B cell (primary cell): ENCODE measurements at regions of chr4 and their contacts with region 1.

Region 1: GRCh38 chr4:38319456-38320342 is 344.3 kb upstream of the KLF3 start:
- DNase-seq: peak; percentile 85
- ATAC-seq: peak; percentile 81
- H3K4me3 ChIP-seq: peak overlapping the region; percentile 43 to 74 (median 54)
- H3K4me3 Mint-ChIP-seq: peak overlapping the region; percentile 83
- H3K27ac ChIP-seq: peak overlapping the region; percentile 82 to 87
- H3K27ac Mint-ChIP-seq: peak overlapping the region; percentile 86
- H3K4me1 ChIP-seq: peaks cover 16 to 21% of the 10 kb centered on the region in 2 donors
- H3K4me1 Mint-ChIP-seq: peaks cover 29% of the 10 kb centered on the region
- H3K27me3 ChIP-seq: no peaks in the 10 kb centered on the region
- H3K27me3 Mint-ChIP-seq: no peaks in the 10 kb centered on the region
- CTCF ChIP-seq: peak; percentile 93

Region 2: DNA sequence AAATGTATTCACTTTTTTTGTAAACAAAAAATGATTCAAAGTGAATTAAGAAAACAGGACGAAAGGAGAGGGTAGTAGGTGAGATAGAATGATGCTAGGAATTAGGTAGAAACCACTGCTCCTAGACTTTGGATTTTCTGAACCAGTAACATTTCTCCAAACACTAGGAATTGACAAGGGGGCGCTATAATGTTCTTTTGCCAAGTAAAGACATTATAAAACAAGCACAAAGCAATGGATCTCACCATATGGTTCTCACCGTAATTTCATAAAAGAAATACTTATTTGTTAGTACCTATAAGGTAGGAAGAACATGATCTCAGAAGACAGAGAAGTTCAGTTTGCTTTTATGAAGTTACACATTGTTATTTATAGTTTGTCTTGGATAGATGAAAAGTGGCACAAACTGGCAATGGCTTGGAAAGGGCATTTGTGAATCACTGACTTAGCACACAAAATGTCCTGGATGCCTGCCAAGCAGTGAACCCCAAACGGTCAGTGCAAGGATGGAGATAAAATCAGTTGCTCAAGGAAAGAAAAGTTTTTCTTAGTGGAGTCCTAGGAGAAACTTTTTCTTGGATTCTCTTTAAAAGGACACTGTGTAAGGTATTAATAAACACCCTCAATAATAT is 436.9 kb before region 1 on chr4:
- CTCF ChIA-PET with region 1: no interaction called
- POLR2A ChIA-PET with region 1: no interaction called
- intact Hi-C with region 1: no loop called
- DNase-seq: no peak
- ATAC-seq: no peak
- H3K4me3 ChIP-seq: no peak overlapping the region
- H3K4me3 Mint-ChIP-seq: no peak overlapping the region
- H3K27ac ChIP-seq: no peak overlapping the region
- H3K27ac Mint-ChIP-seq: no peak overlapping the region
- H3K4me1 ChIP-seq: peaks cover 11 to 14% of the 10 kb centered on the region in 2 donors
- H3K4me1 Mint-ChIP-seq: peaks cover 12% of the 10 kb centered on the region
- H3K27me3 ChIP-seq: no peaks in the 10 kb centered on the region
- H3K27me3 Mint-ChIP-seq: no peaks in the 10 kb centered on the region
- CTCF ChIP-seq: no peak

Region 3: GRCh38 chr4:38675146-38676121 is 355.7 kb after region 1 on chr4:
- CTCF ChIA-PET with region 1: interaction called, 109 read pairs
- POLR2A ChIA-PET with region 1: no interaction called
- intact Hi-C with region 1: loop called (anchors 1 kb)
- DNase-seq: peak; percentile 87
- ATAC-seq: peak; percentile 73
- H3K4me3 ChIP-seq: no peak overlapping the region
- H3K4me3 Mint-ChIP-seq: peak overlapping the region; percentile 33
- H3K27ac ChIP-seq: peak overlapping the region in 1 of 2 donors; percentile 73
- H3K27ac Mint-ChIP-seq: peak overlapping the region; percentile 59
- H3K4me1 ChIP-seq: peaks cover 55 to 59% of the 10 kb centered on the region in 2 donors
- H3K4me1 Mint-ChIP-seq: peaks cover 78% of the 10 kb centered on the region
- H3K27me3 ChIP-seq: no peaks in the 10 kb centered on the region
- H3K27me3 Mint-ChIP-seq: no peaks in the 10 kb centered on the region
- CTCF ChIP-seq: peak; percentile 93

Region 4: DNA sequence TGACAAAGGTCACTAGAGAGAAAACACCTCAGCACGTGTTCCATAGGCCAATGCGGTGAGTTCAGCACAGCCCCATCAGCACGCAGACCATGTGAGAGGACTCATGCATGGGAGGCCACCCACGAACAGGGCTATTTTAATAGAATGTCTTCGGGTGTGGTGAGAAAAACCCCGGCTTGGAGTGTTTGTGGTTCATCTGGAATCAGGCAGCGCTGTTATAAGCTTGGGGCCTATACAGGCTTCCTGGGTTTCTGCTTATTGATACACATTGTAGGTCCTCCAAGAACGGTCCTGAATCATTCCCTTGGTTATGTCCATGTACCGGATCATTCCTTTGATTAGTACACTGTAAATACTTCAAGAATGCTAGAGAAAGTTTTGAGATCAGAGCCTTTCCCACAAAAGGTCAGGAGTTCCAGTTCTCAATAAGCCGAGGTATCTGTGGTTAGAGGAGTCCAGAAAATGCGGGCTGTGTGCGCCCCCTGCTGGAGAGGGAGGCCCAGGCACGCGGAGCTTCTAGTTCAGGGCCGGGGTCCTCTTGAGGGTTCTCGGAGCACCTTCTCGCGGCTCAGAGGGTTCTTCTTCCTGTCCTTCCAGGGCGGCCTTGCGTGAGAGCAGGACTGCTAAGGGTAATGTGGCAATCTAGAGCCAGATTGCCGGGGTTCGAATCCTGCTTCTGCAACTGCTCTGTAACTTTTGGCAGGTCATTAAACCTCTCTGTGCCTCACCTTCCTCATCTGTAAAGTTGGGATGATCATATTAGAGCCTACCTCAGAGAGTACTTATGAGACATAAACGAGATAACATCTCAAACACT is 411.3 kb after region 1 on chr4:
- CTCF ChIA-PET with region 1: interaction called, 3 read pairs
- POLR2A ChIA-PET with region 1: no interaction called
- intact Hi-C with region 1: loop called (anchors 1 kb)
- DNase-seq: peak; percentile 88
- ATAC-seq: peak; percentile 83
- H3K4me3 ChIP-seq: peak overlapping the region in 1 of 5 experiments; percentile 10
- H3K4me3 Mint-ChIP-seq: peak overlapping the region; percentile 69
- H3K27ac ChIP-seq: peak overlapping the region; percentile 32 to 40
- H3K27ac Mint-ChIP-seq: peak overlapping the region; percentile 75
- H3K4me1 ChIP-seq: peaks cover 13 to 27% of the 10 kb centered on the region in 2 donors
- H3K4me1 Mint-ChIP-seq: peaks cover 33% of the 10 kb centered on the region
- H3K27me3 ChIP-seq: no peaks in the 10 kb centered on the region
- H3K27me3 Mint-ChIP-seq: no peaks in the 10 kb centered on the region
- CTCF ChIP-seq: peak; percentile 92

Region 5: GRCh38 chr4:38804654-38805295 is 485.1 kb after region 1 on chr4 and contains the start of gene TLR1:
- CTCF ChIA-PET with region 1: no interaction called
- POLR2A ChIA-PET with region 1: no interaction called
- intact Hi-C with region 1: loop called (anchors 5 kb)
- DNase-seq: peak; percentile 85
- ATAC-seq: peak; percentile 52
- H3K4me3 ChIP-seq: peak within 1 kb of the TSS; percentile 57 to 97 (median 70)
- H3K4me3 Mint-ChIP-seq: peak within 1 kb of the TSS; percentile 80
- H3K27ac ChIP-seq: peak within 1 kb of the TSS; percentile 72 to 97
- H3K27ac Mint-ChIP-seq: peak within 1 kb of the TSS; percentile 95
- H3K4me1 ChIP-seq: peaks cover 32 to 45% of the 10 kb centered on the region in 2 donors
- H3K4me1 Mint-ChIP-seq: peaks cover 56% of the 10 kb centered on the region
- H3K27me3 ChIP-seq: no peaks in the 10 kb centered on the region
- H3K27me3 Mint-ChIP-seq: no peaks in the 10 kb centered on the region
- CTCF ChIP-seq: peak; percentile 75
- total RNA-seq, gene TLR1: 50.8 and 54.1 TPM in 2 replicates

Region 6: DNA sequence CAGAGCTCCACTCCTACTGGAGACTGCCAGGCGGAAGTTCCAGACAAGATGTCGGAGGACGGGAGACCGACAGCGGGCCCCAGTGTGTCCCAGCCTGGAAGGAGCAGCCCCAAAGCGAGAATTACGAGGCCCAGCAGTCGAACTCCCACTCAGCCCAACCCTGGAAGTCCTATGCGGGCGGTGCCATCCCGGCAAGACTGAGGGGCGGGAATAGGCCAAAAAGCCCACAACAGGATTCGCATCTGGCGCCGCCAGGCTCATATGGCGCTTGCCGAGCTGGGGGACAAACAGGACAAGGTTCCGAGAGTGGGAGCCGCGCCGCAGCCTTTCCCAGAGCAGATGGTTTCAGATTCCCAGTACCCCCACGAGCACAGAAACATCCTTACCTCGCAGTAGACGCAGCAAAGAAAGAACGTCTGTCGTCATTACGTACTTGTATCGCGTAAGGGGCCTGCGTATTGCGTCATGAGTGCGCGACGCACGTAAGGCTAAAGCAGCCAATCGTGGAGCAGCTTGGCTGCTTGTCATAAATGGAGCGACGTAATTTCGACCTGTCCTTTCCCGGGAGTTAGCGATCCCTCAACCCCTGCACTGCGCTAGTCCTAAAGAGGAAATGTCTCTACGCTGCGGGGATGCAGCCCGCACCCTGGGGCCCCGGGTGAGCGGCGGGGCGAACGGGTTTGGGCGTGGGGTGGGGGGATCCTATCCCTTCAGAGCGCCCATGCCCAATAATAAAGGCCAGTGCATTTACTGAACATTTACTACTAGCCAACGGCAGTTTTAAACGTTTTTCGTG is 1139.0 kb after region 1 on chr4 and contains the starts of genes LIAS and RPL9:
- CTCF ChIA-PET with region 1: no interaction called
- POLR2A ChIA-PET with region 1: no interaction called
- intact Hi-C with region 1: loop called (anchors 5 kb)
- DNase-seq: peak; percentile 98
- ATAC-seq: peak; percentile 86
- H3K4me3 ChIP-seq: peak within 1 kb of the TSS; percentile 77 to 100 (median 98)
- H3K4me3 Mint-ChIP-seq: peak within 1 kb of the TSS; percentile 97
- H3K27ac ChIP-seq: peak within 1 kb of the TSS; percentile 98 to 99
- H3K27ac Mint-ChIP-seq: peak within 1 kb of the TSS; percentile 99
- H3K4me1 ChIP-seq: peaks cover 19 to 27% of the 10 kb centered on the region in 2 donors
- H3K4me1 Mint-ChIP-seq: peaks cover 38% of the 10 kb centered on the region
- H3K27me3 ChIP-seq: no peaks in the 10 kb centered on the region
- H3K27me3 Mint-ChIP-seq: no peaks in the 10 kb centered on the region
- CTCF ChIP-seq: no peak
- total RNA-seq, gene LIAS: 20.9 and 24.7 TPM in 2 replicates
- total RNA-seq, gene RPL9: 2,031 and 2,048 TPM in 2 replicates